Calu3 (cell line): ENCODE measurements at regions of chr11 and their contacts with region 1.

Region 1: GRCh38 chr11:64652586-64653387 is 61.8 kb downstream of the SLC22A12 start:
- DNase-seq: peak; percentile 89
- H3K4me3 Mint-ChIP-seq: no peak overlapping the region
- H3K27ac Mint-ChIP-seq: no peak overlapping the region
- H3K4me1 Mint-ChIP-seq: no peaks in the 10 kb centered on the region
- H3K27me3 Mint-ChIP-seq: peaks cover 88% of the 10 kb centered on the region
- CTCF ChIP-seq: peak; percentile 80

Region 2: DNA sequence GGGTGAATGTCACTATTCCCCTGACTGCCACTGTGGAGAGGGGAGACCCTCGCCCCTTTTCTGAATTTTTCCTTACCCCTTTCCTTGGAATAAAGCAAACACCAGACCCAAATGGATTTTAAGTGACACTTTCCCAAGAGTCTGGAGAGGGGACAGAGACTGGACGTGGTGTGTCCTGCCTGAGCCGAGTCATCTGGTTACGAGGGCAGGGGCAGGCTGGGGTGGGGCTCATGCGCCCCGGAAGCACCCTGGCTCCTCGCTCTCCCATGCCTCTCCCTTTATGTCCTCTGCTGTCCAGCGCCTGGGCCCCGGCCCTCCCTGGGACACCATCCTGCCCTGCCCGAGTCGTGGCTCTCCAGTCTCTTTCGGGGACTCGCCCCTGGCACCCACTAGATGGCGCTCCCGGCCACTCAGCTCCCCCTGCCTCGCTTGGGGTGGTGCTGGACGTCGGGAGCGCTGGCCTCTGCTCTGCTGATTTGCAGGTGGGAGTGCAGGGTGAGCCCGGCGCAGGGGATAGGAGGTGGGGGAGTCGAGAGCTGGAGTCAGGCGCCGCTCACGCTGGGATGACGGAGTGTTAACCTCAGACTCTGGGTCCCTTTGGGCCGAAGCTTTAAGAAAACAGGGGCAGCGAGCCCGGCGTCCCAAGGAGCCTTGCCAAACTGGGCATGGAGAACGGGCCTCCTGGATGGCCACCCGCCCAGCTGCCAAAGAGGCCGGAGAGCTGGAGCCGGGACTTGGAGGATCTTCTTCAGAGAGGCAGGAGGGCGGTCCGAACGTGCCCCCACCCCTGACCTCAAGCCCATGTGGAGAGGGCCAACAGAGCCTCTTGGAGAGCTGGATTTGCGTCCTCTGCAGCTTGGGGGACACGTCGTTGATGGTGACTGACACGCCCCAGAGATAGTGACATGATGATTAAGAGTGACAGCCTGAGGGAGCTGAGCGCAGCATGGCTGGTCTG is 203.9 kb before region 1 on chr11:
- CTCF ChIA-PET with region 1: interaction called, 15 read pairs
- intact Hi-C with region 1: loop called (anchors 2 kb)
- DNase-seq: peak; percentile 90
- H3K4me3 Mint-ChIP-seq: peak overlapping the region; percentile 62
- H3K27ac Mint-ChIP-seq: no peak overlapping the region
- H3K4me1 Mint-ChIP-seq: peaks cover 10% of the 10 kb centered on the region
- H3K27me3 Mint-ChIP-seq: peaks cover 88% of the 10 kb centered on the region
- CTCF ChIP-seq: peak; percentile 61

Region 3: DNA sequence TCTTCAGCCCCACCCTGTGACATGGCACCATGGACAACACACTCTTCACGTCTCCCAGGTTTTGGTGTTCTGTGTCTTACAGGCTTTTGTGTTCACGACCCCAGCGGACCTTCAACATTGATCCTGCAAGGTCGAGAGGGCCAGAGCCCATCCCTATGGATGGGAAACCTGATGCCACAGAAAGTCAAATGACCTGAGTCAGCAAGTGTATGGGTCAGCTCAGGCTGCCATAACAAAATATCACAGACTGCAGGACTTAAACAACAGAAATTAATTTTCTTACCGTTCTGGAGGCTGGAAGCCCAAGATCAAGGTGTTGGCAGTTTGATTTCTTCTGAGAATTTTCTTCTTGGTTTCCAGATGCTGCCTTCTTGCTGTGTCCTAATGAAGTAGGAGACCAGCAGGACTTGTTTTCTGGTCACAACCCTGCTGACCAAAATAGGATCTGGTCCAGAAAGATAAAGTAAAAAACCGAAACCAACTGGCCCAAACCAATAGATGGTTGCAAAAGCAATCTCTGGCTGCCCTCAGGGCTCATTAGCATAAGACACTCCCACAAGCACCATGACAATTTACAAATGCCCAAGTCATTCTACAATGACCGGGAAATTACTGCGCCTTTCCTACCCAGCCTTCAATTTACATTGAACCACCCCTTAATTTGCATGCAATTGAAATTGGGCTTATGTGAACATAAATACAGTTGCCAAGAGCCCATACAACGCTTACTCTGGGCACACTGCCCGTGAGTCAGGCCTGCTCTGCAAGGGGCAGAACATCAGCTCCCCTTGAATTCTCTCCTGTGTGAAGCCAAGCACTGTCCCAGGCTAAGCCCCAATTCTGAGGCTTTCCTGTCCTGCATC is 180.0 kb before region 1 on chr11:
- CTCF ChIA-PET with region 1: no interaction called
- intact Hi-C with region 1: no loop called
- DNase-seq: no peak
- H3K4me3 Mint-ChIP-seq: no peak overlapping the region
- H3K27ac Mint-ChIP-seq: no peak overlapping the region
- H3K4me1 Mint-ChIP-seq: no peaks in the 10 kb centered on the region
- H3K27me3 Mint-ChIP-seq: peaks cover 100% of the 10 kb centered on the region
- CTCF ChIP-seq: no peak

Region 4: DNA sequence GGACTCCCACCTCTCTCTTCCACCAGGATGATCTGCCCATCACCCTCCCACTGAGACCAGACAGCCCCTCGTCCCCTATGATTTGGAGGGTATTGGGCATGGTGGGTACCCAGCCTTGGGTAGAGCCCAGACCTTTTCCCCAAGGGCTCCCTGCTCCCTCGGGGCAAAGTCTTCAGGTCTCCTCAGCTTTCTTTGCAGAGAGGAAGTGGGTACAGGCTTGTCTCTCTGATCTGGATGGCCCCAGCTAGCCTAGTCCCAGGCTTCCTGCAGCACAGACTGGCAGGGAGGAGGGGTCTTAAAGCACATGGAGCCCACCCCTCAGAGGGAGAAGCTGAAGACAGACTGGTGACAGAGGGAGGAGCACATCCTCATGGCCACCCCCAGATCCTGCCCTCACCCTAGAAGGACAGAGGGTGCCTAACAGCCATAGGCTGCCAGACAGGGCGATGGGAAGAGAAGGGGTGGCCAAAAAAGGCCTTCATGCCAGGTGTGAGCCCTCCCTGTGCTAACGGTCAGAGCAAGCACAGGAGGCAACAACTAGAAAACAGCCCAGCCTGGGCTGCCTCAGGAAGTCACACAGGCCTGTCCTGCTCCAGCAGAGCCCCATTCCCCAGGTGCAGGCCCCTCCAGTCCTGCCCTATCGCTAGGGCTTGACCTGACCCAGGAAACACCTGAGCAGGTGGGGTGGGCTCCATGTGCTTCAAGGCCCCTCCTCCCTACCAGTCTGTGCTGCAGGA is 31.3 kb before region 1 on chr11:
- CTCF ChIA-PET with region 1: no interaction called
- intact Hi-C with region 1: no loop called
- DNase-seq: no peak
- H3K4me3 Mint-ChIP-seq: no peak overlapping the region
- H3K27ac Mint-ChIP-seq: no peak overlapping the region
- H3K4me1 Mint-ChIP-seq: no peaks in the 10 kb centered on the region
- H3K27me3 Mint-ChIP-seq: peaks cover 64% of the 10 kb centered on the region
- CTCF ChIP-seq: no peak

Region 5: GRCh38 chr11:64633555-64634159 is 19.1 kb before region 1 on chr11:
- CTCF ChIA-PET with region 1: interaction called, 11 read pairs
- intact Hi-C with region 1: no loop called
- DNase-seq: no peak
- H3K4me3 Mint-ChIP-seq: no peak overlapping the region
- H3K27ac Mint-ChIP-seq: no peak overlapping the region
- H3K4me1 Mint-ChIP-seq: no peaks in the 10 kb centered on the region
- H3K27me3 Mint-ChIP-seq: peaks cover 74% of the 10 kb centered on the region
- CTCF ChIP-seq: no peak

Region 6: DNA sequence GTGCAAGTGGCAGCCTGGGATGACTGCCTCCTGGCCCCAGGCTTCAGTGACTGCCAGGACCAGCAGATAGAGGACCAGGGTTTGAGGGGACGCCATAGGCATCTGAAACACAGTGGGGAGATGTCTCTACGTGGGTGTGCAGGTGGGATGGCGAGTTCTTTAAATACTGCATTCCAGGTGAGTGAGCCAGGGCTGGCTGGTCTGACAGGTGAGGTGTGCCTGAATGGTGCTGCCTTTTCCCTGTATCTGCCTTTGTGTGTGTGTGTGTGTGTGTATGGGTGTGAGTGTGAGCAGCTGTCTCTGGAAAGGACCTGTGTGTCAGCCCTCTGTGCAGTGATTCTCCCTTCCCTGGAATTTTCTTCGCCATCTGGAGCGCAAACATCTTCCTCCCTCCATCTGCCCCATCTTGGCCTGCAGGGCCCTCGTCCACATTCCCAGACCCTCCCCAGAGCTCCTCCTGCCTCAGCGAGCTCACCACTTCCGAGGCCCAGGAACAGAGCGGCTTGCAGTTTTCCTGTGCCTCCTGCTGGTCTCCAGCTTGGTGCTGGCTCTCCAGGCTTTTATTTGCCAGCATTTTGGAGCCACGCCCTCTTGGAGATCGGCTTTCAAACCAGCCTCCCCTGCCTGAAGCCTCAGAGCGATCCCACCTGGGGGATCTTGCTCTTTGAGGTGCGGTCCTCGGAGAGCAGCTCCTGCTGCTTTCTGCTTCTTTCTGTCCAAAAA is 282.7 kb after region 1 on chr11 and contains the start of gene GPHA2:
- CTCF ChIA-PET with region 1: no interaction called
- intact Hi-C with region 1: no loop called
- DNase-seq: no peak
- H3K4me3 Mint-ChIP-seq: no peak within 1 kb of the TSS
- H3K27ac Mint-ChIP-seq: no peak within 1 kb of the TSS
- H3K4me1 Mint-ChIP-seq: no peaks in the 10 kb centered on the region
- H3K27me3 Mint-ChIP-seq: peaks cover 31% of the 10 kb centered on the region
- CTCF ChIP-seq: no peak
- total RNA-seq, gene GPHA2: not detected in 2 replicates